Tibial artery (tissue), 4 donors: ENCODE measurements at regions of chr10 and their contacts with region 1.

Region 1: DNA sequence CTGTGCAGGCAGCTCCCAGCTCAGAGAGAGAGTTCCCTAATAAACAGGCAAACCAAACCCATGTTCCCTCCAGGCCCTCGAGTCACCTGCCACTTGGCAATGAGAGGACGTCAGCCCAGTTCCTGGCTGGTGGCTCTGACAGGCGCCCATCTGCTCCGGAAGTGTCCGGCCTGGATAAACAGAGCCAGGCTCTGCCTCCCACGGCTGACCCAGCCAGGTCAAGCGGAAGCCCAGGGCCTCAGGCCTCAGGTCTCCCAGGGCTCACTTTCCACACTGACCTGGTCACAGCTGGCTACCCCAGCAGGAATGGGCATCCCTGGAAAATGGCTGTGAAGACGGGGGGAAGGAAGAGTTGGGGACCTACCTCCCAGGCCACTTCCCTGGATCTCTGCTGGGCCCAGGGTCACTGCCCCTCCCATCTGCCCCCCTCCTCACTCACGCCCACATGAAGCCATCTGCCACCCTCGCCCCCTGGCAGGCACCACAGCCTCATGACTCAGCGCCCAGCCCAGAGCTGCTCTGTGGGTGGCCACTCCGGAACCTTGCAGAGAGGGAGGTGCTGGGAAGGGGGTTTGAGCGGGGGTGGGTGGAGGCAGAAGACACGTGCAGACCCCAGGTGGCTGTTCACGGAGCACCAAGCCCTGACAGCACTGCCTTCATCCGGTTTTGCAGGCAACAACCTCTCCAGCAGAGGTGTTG is 37.4 kb upstream of the DUSP5 start:
- DNase-seq: peak in 1 of 2 donors; percentile 23
- H3K4me3 ChIP-seq: no peak overlapping the region
- H3K27ac ChIP-seq: no peak overlapping the region
- H3K4me1 ChIP-seq: peaks cover 0 to 6% (median 0%) of the 10 kb centered on the region in 4 donors
- H3K27me3 ChIP-seq: no peaks in the 10 kb centered on the region
- CTCF ChIP-seq: no peak

Region 2: DNA sequence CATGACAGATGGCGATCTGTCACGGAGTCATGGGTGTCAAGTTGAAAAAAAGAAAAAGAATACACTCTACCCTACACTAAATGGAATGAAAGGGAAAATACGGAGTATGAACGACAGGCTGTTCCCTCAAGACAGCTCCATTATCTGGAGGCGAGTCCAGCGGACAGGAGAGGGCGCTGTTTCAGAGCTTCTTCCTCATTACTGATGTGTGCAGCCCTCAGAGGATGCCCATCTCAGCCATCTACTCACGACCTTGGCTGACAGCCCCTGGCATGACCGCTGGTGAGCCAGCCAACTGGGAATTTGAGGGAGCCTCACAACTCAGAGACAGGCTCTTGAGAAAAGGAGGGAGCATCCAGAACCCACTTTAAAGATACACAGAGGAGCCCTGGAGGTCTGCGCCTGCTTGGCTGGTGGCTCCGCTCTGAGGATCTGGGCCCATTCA is 105.9 kb before region 1 on chr10:
- intact Hi-C with region 1: loop called (anchors 10 kb)
- DNase-seq: peak; percentile 64 to 75
- H3K4me3 ChIP-seq: no peak overlapping the region
- H3K27ac ChIP-seq: no peak overlapping the region
- H3K4me1 ChIP-seq: peaks cover 0 to 17% (median 0%) of the 10 kb centered on the region in 4 donors
- H3K27me3 ChIP-seq: peaks cover 0 to 34% of the 10 kb centered on the region in 2 donors
- CTCF ChIP-seq: peak; percentile 46 to 55

Region 3: DNA sequence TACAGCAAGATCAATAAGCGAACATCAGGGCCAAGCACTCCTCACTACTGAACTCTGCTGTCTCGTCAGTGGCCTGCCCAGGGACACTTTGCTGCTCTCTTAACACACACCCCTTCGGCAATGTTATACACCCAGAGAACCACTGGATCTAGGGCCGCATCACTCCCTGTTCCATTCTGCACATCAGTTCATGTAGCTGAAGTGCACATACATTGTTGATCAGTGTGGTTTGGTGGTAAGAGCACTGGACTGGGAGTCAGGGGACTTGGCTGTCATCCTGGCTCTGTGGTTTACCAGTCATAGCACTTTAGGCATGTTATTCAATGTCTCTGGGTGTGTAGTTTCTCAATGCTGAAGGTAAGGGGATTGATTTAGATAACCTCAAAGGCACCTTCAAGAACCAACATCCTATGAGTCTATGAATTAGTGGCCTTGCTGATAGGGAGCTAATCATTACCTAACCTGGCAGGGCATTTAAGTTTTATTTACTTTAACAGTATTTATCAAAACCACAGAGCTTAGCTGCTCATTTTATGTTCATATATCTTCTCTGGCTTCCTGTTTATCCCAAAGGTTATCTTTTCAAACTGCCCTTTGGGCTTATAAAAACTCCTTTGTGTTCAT is 62.2 kb after region 1 on chr10:
- intact Hi-C with region 1: no loop called
- DNase-seq: no peak
- H3K4me3 ChIP-seq: no peak overlapping the region
- H3K27ac ChIP-seq: no peak overlapping the region
- H3K4me1 ChIP-seq: no peaks in the 10 kb centered on the region
- H3K27me3 ChIP-seq: no peaks in the 10 kb centered on the region
- CTCF ChIP-seq: no peak